ENCODE measurements at regions of chr12 and their contacts with region 1.

Region 1: GRCh38 chr12:19031032-19031431 is 98.5 kb upstream of the PLEKHA5 start:
- DNase-seq: no peak
- H3K4me3 ChIP-seq: no peak overlapping the region
- H3K4me1 ChIP-seq: peaks cover 12% of the 10 kb centered on the region
- H3K27me3 ChIP-seq: no peaks in the 10 kb centered on the region

Region 2: DNA sequence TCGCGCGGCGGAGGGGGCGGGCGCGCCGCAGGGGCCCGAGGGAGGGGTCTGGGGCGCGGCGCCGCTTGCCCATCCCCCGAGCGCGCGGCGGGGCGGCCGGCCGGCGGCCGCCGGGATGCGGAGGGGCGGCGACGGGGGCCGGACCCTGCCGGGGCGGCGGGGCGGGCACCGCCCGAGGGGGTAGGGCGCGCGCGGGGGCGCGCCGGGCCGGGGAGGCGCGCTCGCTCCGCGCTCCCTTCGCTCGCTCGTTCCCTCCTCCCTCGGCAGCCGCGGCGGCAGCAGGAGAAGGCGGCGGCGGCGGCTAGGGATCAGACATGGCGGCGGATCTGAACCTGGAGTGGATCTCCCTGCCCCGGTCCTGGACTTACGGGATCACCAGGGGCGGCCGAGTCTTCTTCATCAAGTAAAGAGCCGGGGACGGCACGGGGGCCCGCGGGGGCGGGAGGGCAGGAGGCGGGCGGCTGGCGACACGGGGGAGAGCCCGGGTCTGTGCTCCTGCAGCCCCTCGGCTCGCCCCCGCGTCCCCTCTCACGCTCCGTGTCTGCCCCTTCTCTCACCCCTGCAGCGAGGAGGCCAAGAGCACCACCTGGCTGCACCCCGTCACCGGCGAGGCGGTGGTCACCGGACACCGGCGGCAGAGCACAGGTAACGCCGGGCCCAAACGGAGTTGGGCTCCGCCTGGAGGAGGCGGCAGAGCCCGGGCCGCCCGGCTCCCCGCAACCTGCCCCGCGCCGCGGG is 98.6 kb after region 1 on chr12 and contains the start of gene PLEKHA5:
- in situ Hi-C with region 1: loop called (anchors 25 kb)
- DNase-seq: peak; percentile 64 to 84
- H3K4me3 ChIP-seq: peak within 1 kb of the TSS; percentile 73
- H3K4me1 ChIP-seq: peaks cover 24% of the 10 kb centered on the region
- H3K27me3 ChIP-seq: no peaks in the 10 kb centered on the region